H1 (cell line): ENCODE measurements at regions of chr17 and their contacts with region 1.

Region 1: GRCh38 chr17:48671697-48672171 is 45.6 kb upstream of the HOXB9 start:
- DNase-seq: peak; percentile 13 to 93
- H3K4me3 ChIP-seq: peak overlapping the region in 3 of 4 experiments; percentile 16 to 49 (median 32); a peak in 4 of 8 replicates
- H3K27ac ChIP-seq: no peak overlapping the region
- H3K4me1 ChIP-seq: no peaks in the 10 kb centered on the region; a peak in 1 of 7 replicates
- H3K27me3 ChIP-seq: peaks cover 0 to 9% (median 5%) of the 10 kb centered on the region in 4 experiments; a peak in 4 of 7 replicates
- CTCF ChIP-seq: peak; percentile 71 to 92 (median 84)
- EP300 ChIP-seq: no peak
- POLR2A ChIP-seq: no peak
- RAD21 ChIP-seq: peak; percentile 93 to 95

Region 2: DNA sequence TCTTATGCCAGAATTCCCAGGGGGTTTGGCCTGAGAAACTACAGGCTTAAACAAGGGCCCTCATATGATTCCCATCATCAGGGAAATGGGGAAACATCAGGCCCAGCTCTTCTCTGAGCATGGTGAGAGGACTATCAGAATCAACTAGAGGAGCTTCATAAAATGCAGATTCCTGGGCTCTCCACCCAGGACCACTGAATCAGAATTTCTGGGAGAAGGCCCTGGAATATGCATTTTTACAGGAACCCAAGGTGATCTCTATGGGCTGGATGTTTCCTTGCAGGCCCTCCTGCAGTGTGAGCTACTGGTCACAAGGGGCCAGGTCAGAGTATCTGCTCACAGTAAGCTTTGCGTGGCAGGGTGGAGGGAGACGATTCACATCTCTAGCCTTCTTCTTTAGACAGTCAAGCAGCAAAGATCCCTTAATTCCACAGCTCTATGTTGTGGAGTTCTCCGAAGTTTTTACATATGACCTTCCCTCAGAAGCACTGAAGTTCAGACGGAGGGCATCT is 95.6 kb after region 1 on chr17:
- CTCF ChIA-PET with region 1: interaction called, 12 read pairs
- POLR2A ChIA-PET with region 1: no interaction called
- DNase-seq: no peak
- H3K4me3 ChIP-seq: no peak overlapping the region
- H3K27ac ChIP-seq: no peak overlapping the region
- H3K4me1 ChIP-seq: no peaks in the 10 kb centered on the region
- H3K27me3 ChIP-seq: peaks cover under 1 to 4% (median 2%) of the 10 kb centered on the region in 4 experiments; a peak in 5 of 7 replicates
- CTCF ChIP-seq: peak in 1 of 3 experiments; percentile 12; a peak in 1 of 4 replicates
- EP300 ChIP-seq: no peak
- POLR2A ChIP-seq: no peak
- RAD21 ChIP-seq: no peak

Region 3: GRCh38 chr17:48804925-48805411 is 133.2 kb after region 1 on chr17:
- CTCF ChIA-PET with region 1: interaction called, 47 read pairs
- POLR2A ChIA-PET with region 1: no interaction called
- DNase-seq: peak; percentile 68 to 97
- H3K4me3 ChIP-seq: peak overlapping the region in 1 of 4 experiments; percentile 35; a peak in 3 of 8 replicates
- H3K27ac ChIP-seq: no peak overlapping the region
- H3K4me1 ChIP-seq: no peaks in the 10 kb centered on the region; a peak in 2 of 7 replicates
- H3K27me3 ChIP-seq: peaks cover 0 to 2% (median 0%) of the 10 kb centered on the region in 4 experiments; a peak in 1 of 7 replicates
- CTCF ChIP-seq: peak; percentile 90 to 93 (median 90)
- EP300 ChIP-seq: no peak
- POLR2A ChIP-seq: no peak
- RAD21 ChIP-seq: peak; percentile 98